Heart right ventricle (tissue), 16 donors: ENCODE measurements at regions of chr10 and their contacts with region 1.

Region 1: GRCh38 chr10:132294561-132295318 is 13.0 kb downstream of the STK32C start:
- DNase-seq: no peak
- ATAC-seq: no peak
- H3K4me3 ChIP-seq: no peak overlapping the region
- H3K27ac ChIP-seq: no peak overlapping the region
- H3K4me1 ChIP-seq: peaks cover 0 to 15% (median 6%) of the 10 kb centered on the region in 9 donors
- H3K27me3 ChIP-seq: peaks cover 0 to 8% (median 0%) of the 10 kb centered on the region in 7 donors
- CTCF ChIP-seq: no peak

Region 2: DNA sequence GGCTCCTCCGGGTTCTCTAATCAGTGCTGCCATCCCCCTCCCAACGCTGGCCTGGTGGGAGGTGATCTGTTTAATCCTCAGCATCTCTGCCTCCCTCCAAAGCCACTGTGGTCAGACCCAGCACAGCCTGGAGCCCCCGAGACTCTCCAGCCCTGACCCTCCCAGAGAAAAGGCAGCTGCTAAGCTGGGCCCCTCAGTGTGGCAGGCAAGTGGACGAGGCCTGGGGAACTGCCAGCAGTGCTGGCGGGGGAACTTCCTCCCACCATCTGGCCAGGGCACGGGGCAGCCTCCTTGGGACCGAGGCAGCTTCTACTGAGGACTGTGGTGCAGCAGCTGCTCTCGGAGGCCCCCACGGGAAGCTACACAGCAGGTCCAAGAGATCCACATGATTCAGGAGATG is 56.9 kb before region 1 on chr10:
- intact Hi-C with region 1: loop called in 1 of 10 experiments (anchors 5 kb)
- DNase-seq: peak in 1 of 2 donors; percentile 10
- ATAC-seq: no peak
- H3K4me3 ChIP-seq: no peak overlapping the region
- H3K27ac ChIP-seq: no peak overlapping the region
- H3K4me1 ChIP-seq: peaks cover 0 to 8% (median 0%) of the 10 kb centered on the region in 9 donors
- H3K27me3 ChIP-seq: no peaks in the 10 kb centered on the region
- CTCF ChIP-seq: no peak